ENCODE measurements at regions of chr22 and their contacts with region 1.

Region 1: DNA sequence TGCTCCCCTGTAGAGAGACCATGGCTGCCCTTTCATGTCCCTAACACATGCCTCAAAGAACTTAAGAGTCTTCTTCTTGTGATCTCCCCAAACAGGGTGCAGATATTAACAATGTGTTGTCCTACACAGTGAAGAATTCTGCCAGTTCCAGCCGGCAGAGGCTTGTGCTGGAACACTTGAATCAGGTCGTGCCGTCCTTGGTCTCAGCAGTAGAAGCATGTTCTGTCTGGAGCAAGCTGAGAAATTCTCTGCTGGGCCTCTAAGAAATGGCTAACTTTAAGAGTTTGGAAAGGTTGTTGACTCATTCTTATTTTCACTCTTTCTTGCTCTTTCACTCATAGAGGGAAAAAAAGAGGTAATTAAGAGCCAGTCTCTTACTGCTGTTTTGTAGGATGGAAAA is 71.1 kb upstream of the SLC25A18 start:
- DNase-seq: no peak

Region 2: GRCh38 chr22:17077255-17077654 is 415.0 kb before region 1 on chr22:
- in situ Hi-C with region 1: loop called (anchors 10 kb)
- DNase-seq: no peak

Region 3: GRCh38 chr22:17552737-17553136 is 60.5 kb after region 1 on chr22:
- in situ Hi-C with region 1: loop called (anchors 10 kb)
- DNase-seq: no peak

Region 4: GRCh38 chr22:17628304-17629166 is 136.3 kb after region 1 on chr22 and contains the start of gene ATP6V1E1:
- in situ Hi-C with region 1: no loop called
- DNase-seq: peak; percentile 98

Measured in KBM-7 (cell line).